Activated CD8-positive, alpha-beta T cell treated with anti-CD3 and anti-CD28 coated beads for 36 hours (primary cell): ENCODE measurements at regions of chr10 and their contacts with region 1.

Region 1: GRCh38 chr10:72223743-72224101 is 7.6 kb upstream of the ASCC1 start:
- DNase-seq: peak; percentile 59
- ATAC-seq: peak; percentile 54
- H3K4me3 Mint-ChIP-seq: peak overlapping the region; percentile 4
- H3K27ac Mint-ChIP-seq: peak overlapping the region; percentile 91
- H3K4me1 Mint-ChIP-seq: peaks cover 52% of the 10 kb centered on the region
- H3K27me3 Mint-ChIP-seq: no peaks in the 10 kb centered on the region
- CTCF ChIP-seq: no peak

Region 2: DNA sequence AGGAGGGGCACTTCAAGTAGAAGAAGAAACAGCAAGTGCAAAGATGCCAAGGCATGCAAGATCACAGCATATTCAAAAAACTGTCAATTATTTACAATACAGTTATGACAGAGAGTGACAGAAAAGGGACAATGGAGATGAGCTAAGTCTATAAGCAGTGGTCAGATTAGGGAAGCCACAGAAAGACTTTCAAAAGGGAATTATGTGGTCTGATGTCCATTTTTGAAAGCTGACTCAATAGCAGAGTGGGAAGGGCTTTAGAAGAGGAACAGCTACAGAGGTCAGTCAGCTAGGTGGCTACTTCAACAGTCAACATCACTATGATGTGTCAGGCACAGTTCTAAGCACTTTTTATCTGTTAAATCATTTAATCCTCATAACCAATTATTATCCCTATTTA is 90.2 kb before region 1 on chr10:
- CTCF ChIA-PET with region 1: interaction called, 24 read pairs
- POLR2A ChIA-PET with region 1: no interaction called
- intact Hi-C with region 1: no loop called
- DNase-seq: no peak
- ATAC-seq: no peak
- H3K4me3 Mint-ChIP-seq: no peak overlapping the region
- H3K27ac Mint-ChIP-seq: peak overlapping the region; percentile 0
- H3K4me1 Mint-ChIP-seq: peaks cover 35% of the 10 kb centered on the region
- H3K27me3 Mint-ChIP-seq: no peaks in the 10 kb centered on the region
- CTCF ChIP-seq: no peak

Region 3: DNA sequence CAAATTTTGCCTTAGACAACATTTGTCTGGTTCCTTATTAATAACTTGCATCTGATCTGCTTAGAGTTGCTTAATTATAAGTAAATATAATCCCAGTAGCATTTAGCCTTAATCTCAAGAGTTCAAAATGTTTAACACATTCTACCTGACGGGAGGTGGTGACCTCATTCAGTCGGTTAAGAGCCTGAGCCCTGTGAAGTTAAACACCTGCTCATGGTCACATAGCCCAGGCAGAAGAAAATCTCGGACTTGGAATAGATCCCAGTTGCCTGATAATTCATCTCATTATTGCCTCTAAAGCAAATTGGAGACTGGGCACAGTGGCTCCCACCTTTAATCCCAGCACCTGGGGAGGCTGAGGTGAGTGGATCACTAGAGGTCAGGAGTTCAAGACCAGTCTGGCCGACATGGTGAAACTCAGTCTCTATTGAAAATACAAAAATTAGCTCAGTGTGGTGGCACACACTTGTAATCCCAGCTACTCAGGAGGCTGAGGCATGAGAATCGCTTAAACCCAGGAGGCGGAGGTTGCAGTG is 10.9 kb after region 1 on chr10:
- CTCF ChIA-PET with region 1: interaction called, 25 read pairs
- POLR2A ChIA-PET with region 1: interaction called, 5 read pairs
- intact Hi-C with region 1: no loop called
- DNase-seq: no peak
- ATAC-seq: no peak
- H3K4me3 Mint-ChIP-seq: no peak overlapping the region
- H3K27ac Mint-ChIP-seq: no peak overlapping the region
- H3K4me1 Mint-ChIP-seq: peaks cover 9% of the 10 kb centered on the region
- H3K27me3 Mint-ChIP-seq: no peaks in the 10 kb centered on the region
- CTCF ChIP-seq: no peak

Region 4: GRCh38 chr10:72248468-72249151 is 24.9 kb after region 1 on chr10:
- CTCF ChIA-PET with region 1: interaction called, 17 read pairs
- POLR2A ChIA-PET with region 1: interaction called, 3 read pairs
- intact Hi-C with region 1: loop called (anchors 2 kb)
- DNase-seq: peak; percentile 89
- ATAC-seq: peak; percentile 87
- H3K4me3 Mint-ChIP-seq: peak overlapping the region; percentile 77
- H3K27ac Mint-ChIP-seq: peak overlapping the region; percentile 93
- H3K4me1 Mint-ChIP-seq: peaks cover 72% of the 10 kb centered on the region
- H3K27me3 Mint-ChIP-seq: no peaks in the 10 kb centered on the region
- CTCF ChIP-seq: no peak

Region 5: GRCh38 chr10:72254813-72255568 is 31.3 kb after region 1 on chr10:
- CTCF ChIA-PET with region 1: interaction called, 13 read pairs
- POLR2A ChIA-PET with region 1: interaction called, 6 read pairs
- intact Hi-C with region 1: loop called (anchors 2 kb)
- DNase-seq: peak; percentile 65
- ATAC-seq: peak; percentile 58
- H3K4me3 Mint-ChIP-seq: peak overlapping the region; percentile 66
- H3K27ac Mint-ChIP-seq: peak overlapping the region; percentile 92
- H3K4me1 Mint-ChIP-seq: peaks cover 65% of the 10 kb centered on the region
- H3K27me3 Mint-ChIP-seq: no peaks in the 10 kb centered on the region
- CTCF ChIP-seq: no peak

Region 6: DNA sequence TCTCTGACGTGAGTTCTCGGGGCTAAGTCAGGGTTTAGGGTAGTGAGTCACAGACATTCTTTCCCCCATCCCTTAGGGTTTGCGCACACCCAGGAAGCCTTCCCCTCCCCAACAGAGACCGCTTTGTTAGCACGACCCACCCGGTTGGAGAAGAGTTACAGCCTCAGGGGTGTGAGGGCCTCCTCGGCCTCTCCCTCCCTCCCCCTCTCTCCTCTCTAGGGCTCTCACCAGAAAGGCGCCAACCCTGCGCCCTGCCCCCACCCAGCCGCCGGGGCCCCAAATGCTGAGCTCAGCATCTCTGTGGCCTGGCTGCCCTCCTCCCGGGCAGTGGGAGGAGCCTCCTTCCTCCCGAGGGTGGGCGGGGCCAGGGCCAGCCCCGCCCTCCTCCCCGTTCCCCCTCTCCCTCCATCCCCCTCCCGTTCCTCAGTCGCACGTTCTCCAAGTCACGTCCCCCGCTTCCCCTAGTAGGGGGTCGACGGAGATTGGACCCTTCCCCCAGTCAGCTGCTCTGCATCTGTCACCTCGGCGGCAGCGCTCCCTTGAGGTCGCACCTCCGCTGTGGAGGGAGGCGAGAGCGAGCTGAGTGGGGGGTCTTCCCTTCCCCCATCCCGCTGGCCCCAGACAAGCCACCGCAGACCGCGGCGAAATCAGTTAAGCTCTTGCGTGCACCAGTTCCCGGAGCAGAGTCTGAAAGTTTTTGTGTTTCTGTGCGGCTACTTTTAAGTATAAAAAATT is 37.0 kb after region 1 on chr10:
- CTCF ChIA-PET with region 1: interaction called, 13 read pairs
- POLR2A ChIA-PET with region 1: interaction called, 6 read pairs
- intact Hi-C with region 1: no loop called
- DNase-seq: peak; percentile 96
- ATAC-seq: peak; percentile 82
- H3K4me3 Mint-ChIP-seq: peak overlapping the region; percentile 79
- H3K27ac Mint-ChIP-seq: peak overlapping the region; percentile 96
- H3K4me1 Mint-ChIP-seq: peaks cover 52% of the 10 kb centered on the region
- H3K27me3 Mint-ChIP-seq: no peaks in the 10 kb centered on the region
- CTCF ChIP-seq: no peak